ENCODE measurements at regions of chr11 and their contacts with region 1.

Region 1: GRCh38 chr11:13335319-13335718 is 57.7 kb downstream of the BMAL1 start:
- DNase-seq: peak in 6 of 10 donors; percentile 53 to 88 (median 60)

Region 2: GRCh38 chr11:13143486-13144297 is 191.6 kb before region 1 on chr11:
- intact Hi-C with region 1: no loop called
- DNase-seq: peak in 1 of 10 donors; percentile 42

Region 3: DNA sequence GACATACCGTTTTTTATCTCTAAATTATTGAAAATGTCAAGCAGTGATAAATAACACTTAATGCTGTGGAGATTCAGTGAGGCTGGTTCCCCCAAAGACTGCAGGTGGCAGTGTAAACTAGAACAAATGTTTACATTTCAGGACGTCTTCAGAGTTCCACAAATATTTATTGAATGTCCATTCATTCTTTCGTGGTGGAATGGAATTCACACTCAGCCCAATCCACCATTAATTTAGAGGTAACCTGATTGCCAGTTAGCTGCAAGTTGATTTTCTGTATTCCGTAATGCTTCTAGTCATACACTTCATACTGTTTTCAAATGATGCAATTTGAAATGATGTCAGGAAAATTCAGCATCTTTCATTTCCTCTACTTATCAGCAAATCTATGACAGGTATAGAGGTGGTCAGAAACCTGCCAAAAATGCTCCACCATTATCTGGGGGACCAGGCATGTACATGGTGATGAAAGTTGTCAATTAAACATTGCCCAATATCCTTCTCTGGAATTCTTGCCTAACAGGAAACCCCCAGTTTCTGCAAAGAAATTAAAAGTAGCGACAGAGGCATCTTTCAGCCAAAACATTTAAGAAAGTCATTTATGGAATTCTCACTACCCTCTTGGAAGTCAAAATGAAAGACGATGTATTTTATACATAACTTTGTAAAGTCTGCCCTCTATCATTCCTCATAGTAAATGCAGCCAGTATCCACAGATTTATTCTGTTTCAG is 152.1 kb before region 1 on chr11:
- intact Hi-C with region 1: loop called (anchors 10 kb)
- DNase-seq: peak in 2 of 10 donors; percentile 19 to 51

Region 4: DNA sequence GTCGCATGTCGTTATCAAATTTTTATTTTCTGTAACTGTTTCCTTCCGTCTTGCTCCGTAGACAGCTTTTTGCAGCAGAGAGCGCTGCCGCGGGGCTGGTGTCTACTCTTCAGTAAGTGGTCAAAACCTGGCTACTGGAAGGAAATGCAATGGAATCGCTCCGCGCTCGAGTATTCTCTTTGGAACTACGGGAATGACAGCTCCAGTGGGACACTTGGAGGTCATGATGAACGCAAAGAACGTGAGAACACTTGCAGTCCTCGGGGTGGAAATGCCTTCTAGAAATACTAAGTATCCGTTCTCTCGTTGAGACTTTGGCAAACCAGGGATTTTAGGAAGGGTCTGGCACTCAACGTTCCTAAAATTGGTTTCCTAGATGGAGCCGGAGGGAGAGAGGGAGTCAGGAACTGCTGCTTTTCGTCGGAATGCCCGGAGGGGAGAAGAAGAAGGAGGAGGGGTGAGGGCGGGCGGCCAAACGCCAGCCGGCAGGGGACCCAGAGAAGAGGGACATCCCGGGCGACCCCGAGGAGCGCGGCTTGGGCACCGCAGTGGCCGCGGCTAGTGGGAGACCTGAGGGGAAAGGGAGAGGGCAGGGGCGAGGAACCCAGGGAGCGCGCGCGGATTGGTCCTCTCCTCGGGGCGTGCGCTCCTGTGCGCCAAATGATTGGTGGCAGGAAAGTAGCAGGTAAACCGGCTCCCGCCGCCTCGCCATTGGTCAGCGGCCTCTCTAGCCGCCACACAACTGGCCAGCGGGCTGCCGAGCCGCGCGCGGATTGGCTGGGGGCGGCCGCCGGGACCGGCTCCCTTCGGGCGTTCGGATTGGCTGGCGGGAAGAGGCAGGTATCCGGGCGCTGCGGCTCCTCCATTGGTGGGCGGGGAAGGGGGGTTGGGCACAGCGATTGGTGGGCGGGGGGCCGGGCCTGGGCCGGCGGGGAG is 58.2 kb before region 1 on chr11:
- intact Hi-C with region 1: loop called (anchors 5 kb)
- DNase-seq: peak; percentile 89 to 100 (median 96)

Region 5: GRCh38 chr11:13480195-13480594 is 144.9 kb after region 1 on chr11:
- intact Hi-C with region 1: no loop called
- DNase-seq: peak in 1 of 10 donors; percentile 52